Activated naive CD4-positive, alpha-beta T cell treated with anti-CD3 and anti-CD28 coated beads, Interleukin-2, amount 10 ng/mL, durations not matched to agents 7 days and 5 days (primary cell): ENCODE measurements at regions of chr3 and their contacts with region 1.

Region 1: GRCh38 chr3:132255041-132255746 is 62.0 kb upstream of the ACP3 start:
- DNase-seq: no peak
- H3K4me3 Mint-ChIP-seq: no peak overlapping the region
- H3K27ac Mint-ChIP-seq: no peak overlapping the region
- H3K4me1 Mint-ChIP-seq: no peaks in the 10 kb centered on the region
- H3K27me3 Mint-ChIP-seq: no peaks in the 10 kb centered on the region

Region 2: GRCh38 chr3:132343018-132343612 is 87.9 kb after region 1 on chr3:
- CTCF ChIA-PET with region 1: interaction called, 11 read pairs
- DNase-seq: peak; percentile 42
- H3K4me3 Mint-ChIP-seq: no peak overlapping the region
- H3K27ac Mint-ChIP-seq: no peak overlapping the region
- H3K4me1 Mint-ChIP-seq: no peaks in the 10 kb centered on the region
- H3K27me3 Mint-ChIP-seq: peaks cover 8% of the 10 kb centered on the region